HEK293 (cell line): ENCODE measurements at regions of chr19 and their contacts with region 1.

Region 1: GRCh38 chr19:17766543-17767131 is 15.4 kb downstream of the FCHO1 start:
- H3K4me3 ChIP-seq: peak overlapping the region; percentile 37
- H3K27ac ChIP-seq: no peak overlapping the region; the same call in 1 of the 2 replicates
- H3K4me1 ChIP-seq: no peaks in the 10 kb centered on the region
- CTCF ChIP-seq: peak; percentile 87

Region 2: GRCh38 chr19:17605761-17606745 is 160.6 kb before region 1 on chr19:
- CTCF ChIA-PET with region 1: interaction called, 29 read pairs
- POLR2A ChIA-PET with region 1: interaction called, 6 read pairs
- H3K4me3 ChIP-seq: peak overlapping the region; percentile 43
- H3K27ac ChIP-seq: peak overlapping the region; percentile 78; the same call in 1 of the 2 replicates
- H3K4me1 ChIP-seq: no peaks in the 10 kb centered on the region
- CTCF ChIP-seq: peak; percentile 98

Region 3: GRCh38 chr19:17703824-17704463 is 62.7 kb before region 1 on chr19:
- CTCF ChIA-PET with region 1: interaction called, 22 read pairs
- POLR2A ChIA-PET with region 1: interaction called, 3 read pairs
- H3K4me3 ChIP-seq: no peak overlapping the region
- H3K27ac ChIP-seq: no peak overlapping the region
- H3K4me1 ChIP-seq: no peaks in the 10 kb centered on the region
- CTCF ChIP-seq: peak; percentile 27; the same call in 1 of the 2 replicates

Region 4: DNA sequence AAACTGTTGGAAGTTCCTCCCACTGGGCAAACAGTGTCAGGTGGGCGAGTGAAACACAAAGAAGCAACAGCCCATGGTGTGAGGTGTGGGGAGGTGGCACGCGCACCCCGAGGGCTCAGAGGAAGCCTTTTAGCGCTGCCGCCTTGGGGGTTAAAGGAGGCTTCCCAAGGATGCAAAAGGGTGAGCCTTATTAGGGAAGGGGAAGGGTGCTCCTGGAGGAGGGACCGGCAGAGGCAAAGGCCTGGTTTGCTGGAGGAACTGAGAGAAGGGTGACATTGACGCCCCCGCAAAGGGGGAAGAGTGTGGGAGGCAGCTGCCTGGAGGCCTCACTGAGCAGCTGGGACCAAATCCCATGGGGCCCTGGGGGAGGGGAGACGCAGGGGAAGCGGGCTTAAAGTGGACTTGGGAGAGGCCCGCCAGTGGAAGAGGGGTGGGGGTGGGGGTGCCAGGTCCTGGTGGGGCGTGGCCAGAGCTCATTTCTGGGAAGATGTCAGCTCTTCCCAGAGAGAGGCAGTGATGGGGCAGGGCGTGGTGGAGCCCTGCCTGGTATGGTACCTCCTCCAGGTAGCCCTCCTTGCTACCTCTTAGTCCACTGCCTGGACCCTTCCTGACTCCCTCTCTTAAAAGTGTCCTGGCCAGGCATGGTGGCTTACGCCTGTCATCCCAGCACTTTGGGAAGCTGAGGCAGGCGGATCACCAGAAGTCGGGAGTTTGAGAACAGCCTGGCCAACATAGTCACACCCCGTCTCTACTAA is 27.3 kb before region 1 on chr19:
- CTCF ChIA-PET with region 1: interaction called, 12 read pairs
- POLR2A ChIA-PET with region 1: no interaction called
- H3K4me3 ChIP-seq: no peak overlapping the region
- H3K27ac ChIP-seq: no peak overlapping the region
- H3K4me1 ChIP-seq: no peaks in the 10 kb centered on the region; the same call in 1 of the 2 replicates
- CTCF ChIP-seq: no peak

Region 5: DNA sequence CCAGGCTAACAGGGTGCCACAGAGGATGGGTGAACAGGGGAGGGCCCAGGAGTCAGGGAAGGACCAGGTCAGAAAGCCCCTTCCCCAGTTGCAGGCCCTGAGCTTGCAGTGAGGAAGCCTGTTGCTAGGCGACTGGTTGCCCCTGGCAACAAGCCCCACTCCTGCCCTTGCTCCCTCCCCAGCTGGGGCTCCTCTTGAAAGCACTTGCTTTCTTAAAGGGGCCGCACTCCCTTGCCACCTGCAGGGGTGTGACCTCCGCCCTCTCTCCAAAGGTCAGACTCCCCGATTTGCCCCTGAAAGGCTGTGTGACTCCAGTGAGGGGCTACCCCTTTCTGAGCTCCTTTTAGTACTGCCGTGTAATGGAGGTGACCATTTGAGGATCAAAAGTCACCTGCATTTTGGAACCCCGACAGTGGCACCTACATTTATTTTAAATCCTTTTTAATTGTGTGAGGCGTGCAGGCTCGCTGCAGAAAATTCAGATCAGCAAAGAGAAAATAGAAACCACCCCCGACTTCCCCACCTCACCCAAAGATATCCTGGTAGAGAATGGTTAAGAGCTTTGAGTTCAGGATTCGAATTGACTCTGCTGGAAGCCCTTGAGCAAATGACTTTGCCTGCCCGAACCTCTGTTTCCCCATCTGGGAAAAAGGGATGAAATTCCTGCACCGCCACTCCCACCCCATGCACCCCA is 10.5 kb before region 1 on chr19:
- CTCF ChIA-PET with region 1: interaction called, 46 read pairs
- POLR2A ChIA-PET with region 1: no interaction called
- H3K4me3 ChIP-seq: no peak overlapping the region
- H3K27ac ChIP-seq: no peak overlapping the region
- H3K4me1 ChIP-seq: no peaks in the 10 kb centered on the region
- CTCF ChIP-seq: no peak

Region 6: DNA sequence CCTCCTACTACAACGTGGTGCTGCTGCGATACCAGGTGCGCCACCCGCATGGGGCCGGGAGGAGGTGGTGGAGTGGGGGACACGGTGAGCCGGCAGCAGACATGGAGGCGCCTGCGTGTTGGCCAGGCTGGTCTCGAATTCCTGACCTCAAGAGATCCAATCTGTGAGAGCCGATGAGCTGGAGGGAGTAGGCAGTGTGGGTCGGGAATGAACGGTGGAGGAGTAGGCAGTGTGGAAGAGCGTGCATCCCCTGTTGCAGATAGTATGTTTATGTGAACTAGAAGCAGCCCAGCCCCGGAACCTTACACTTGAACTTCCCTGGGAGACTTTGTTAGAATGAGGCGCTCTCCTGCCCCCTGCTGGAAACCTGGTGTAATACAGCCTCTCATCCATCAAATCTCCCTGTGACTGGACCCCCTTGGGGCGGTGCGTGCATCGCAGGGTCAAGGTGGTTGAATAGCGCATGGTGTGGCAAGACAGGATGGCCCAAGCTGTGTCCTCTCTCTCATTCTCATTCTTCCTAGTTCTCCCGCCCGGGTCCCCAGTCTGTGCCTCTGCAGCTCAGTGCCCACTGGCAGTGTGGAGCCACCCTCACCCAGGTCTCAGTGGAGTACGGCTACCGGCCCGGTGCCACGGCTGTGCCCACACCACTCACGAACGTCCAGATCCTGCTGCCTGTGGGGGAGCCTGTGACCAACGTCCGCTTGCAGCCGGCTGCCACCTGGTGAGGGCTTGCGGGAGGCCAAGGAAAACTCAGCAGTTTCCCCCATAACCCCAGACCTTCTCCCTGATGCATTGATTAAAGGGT is 17.8 kb after region 1 on chr19:
- CTCF ChIA-PET with region 1: interaction called, 11 read pairs
- POLR2A ChIA-PET with region 1: no interaction called
- H3K4me3 ChIP-seq: no peak overlapping the region
- H3K27ac ChIP-seq: no peak overlapping the region
- H3K4me1 ChIP-seq: no peaks in the 10 kb centered on the region
- CTCF ChIP-seq: peak; percentile 79

Region 7: GRCh38 chr19:17824339-17824738 is 57.7 kb after region 1 on chr19:
- CTCF ChIA-PET with region 1: no interaction called
- POLR2A ChIA-PET with region 1: no interaction called
- H3K4me3 ChIP-seq: no peak overlapping the region
- H3K27ac ChIP-seq: no peak overlapping the region
- H3K4me1 ChIP-seq: no peaks in the 10 kb centered on the region
- CTCF ChIP-seq: no peak